Body of pancreas (tissue), 4 donors: ENCODE measurements at regions of chr16 and their contacts with region 1.

Region 1: GRCh38 chr16:79066561-79066960 is 534.0 kb downstream of the MAF start:
- DNase-seq: peak; percentile 16 to 48 (median 32)
- ATAC-seq: no peak
- H3K4me3 ChIP-seq: no peak overlapping the region
- H3K27ac ChIP-seq: no peak overlapping the region
- H3K4me1 ChIP-seq: peaks cover 6% of the 10 kb centered on the region
- H3K27me3 ChIP-seq: no peaks in the 10 kb centered on the region
- CTCF ChIP-seq: no peak
- POLR2A ChIP-seq: no peak

Region 2: GRCh38 chr16:79008036-79008868 is 58.3 kb before region 1 on chr16:
- intact Hi-C with region 1: loop called (anchors 10 kb)
- DNase-seq: no peak
- ATAC-seq: no peak
- H3K4me3 ChIP-seq: no peak overlapping the region
- H3K27ac ChIP-seq: no peak overlapping the region
- H3K4me1 ChIP-seq: no peaks in the 10 kb centered on the region
- H3K27me3 ChIP-seq: no peaks in the 10 kb centered on the region
- CTCF ChIP-seq: no peak
- POLR2A ChIP-seq: no peak